Esophagus squamous epithelium (tissue), 5 donors: ENCODE measurements at regions of chr4 and their contacts with region 1.

Region 1: GRCh38 chr4:76430519-76431388 is 4.3 kb upstream of the SHROOM3 start:
- DNase-seq: no peak
- H3K4me3 ChIP-seq: no peak overlapping the region
- H3K27ac ChIP-seq: no peak overlapping the region
- H3K4me1 ChIP-seq: peaks cover 0 to 18% (median 3%) of the 10 kb centered on the region in 3 donors
- H3K27me3 ChIP-seq: peaks cover 0 to 2% (median 0%) of the 10 kb centered on the region in 4 donors
- CTCF ChIP-seq: peak; percentile 25 to 74 (median 54)
- POLR2A ChIP-seq: no peak

Region 2: GRCh38 chr4:76301068-76301774 is 129.5 kb before region 1 on chr4:
- intact Hi-C with region 1: no loop called
- DNase-seq: no peak
- H3K4me3 ChIP-seq: no peak overlapping the region
- H3K27ac ChIP-seq: peak overlapping the region in 3 of 4 donors; percentile 23 to 60 (median 43)
- H3K4me1 ChIP-seq: peaks cover 0 to 30% (median 13%) of the 10 kb centered on the region in 3 donors
- H3K27me3 ChIP-seq: no peaks in the 10 kb centered on the region
- CTCF ChIP-seq: no peak
- POLR2A ChIP-seq: no peak

Region 3: GRCh38 chr4:76504613-76505465 is 74.1 kb after region 1 on chr4:
- intact Hi-C with region 1: loop called (anchors 2 kb)
- DNase-seq: no peak
- H3K4me3 ChIP-seq: no peak overlapping the region
- H3K27ac ChIP-seq: no peak overlapping the region
- H3K4me1 ChIP-seq: no peaks in the 10 kb centered on the region
- H3K27me3 ChIP-seq: peaks cover 0 to 3% (median 0%) of the 10 kb centered on the region in 4 donors
- CTCF ChIP-seq: peak; percentile 40 to 74 (median 66)
- POLR2A ChIP-seq: no peak

Region 4: DNA sequence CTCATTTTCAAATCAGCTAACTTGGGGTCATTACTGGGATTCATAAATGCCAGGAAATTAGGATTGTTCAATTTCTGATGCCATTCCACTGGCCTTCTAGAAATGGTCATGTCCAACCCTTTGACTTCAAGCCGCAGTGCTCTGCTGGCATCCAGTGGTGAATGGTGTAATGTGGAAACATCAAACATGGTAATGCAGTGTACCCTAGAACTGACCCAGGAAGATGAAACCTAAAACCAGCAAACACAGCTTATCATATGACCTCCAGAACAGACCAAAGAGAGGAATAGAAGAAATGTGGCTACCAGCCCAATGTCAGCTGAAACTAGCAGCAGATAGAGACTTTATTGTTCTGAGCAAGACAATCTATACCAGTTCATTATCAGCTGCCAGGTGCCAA is 1188.6 kb after region 1 on chr4:
- intact Hi-C with region 1: no loop called
- DNase-seq: no peak
- H3K4me3 ChIP-seq: no peak overlapping the region
- H3K27ac ChIP-seq: no peak overlapping the region
- H3K4me1 ChIP-seq: peaks cover 0 to 7% (median 0%) of the 10 kb centered on the region in 3 donors
- H3K27me3 ChIP-seq: no peaks in the 10 kb centered on the region
- CTCF ChIP-seq: no peak
- POLR2A ChIP-seq: no peak